ENCODE measurements at regions of chr4 and their contacts with region 1.

Region 1: GRCh38 chr4:155639704-155640523 is 26.7 kb upstream of the GUCY1A1 start:
- DNase-seq: peak; percentile 45
- ATAC-seq: peak; percentile 85
- H3K4me3 ChIP-seq: no peak overlapping the region
- H3K27ac ChIP-seq: no peak overlapping the region
- H3K4me1 ChIP-seq: peaks cover 7% of the 10 kb centered on the region
- H3K27me3 ChIP-seq: no peaks in the 10 kb centered on the region
- CTCF ChIP-seq: no peak
- EP300 ChIP-seq: no peak
- POLR2A ChIP-seq: no peak
- RAD21 ChIP-seq: no peak

Region 2: DNA sequence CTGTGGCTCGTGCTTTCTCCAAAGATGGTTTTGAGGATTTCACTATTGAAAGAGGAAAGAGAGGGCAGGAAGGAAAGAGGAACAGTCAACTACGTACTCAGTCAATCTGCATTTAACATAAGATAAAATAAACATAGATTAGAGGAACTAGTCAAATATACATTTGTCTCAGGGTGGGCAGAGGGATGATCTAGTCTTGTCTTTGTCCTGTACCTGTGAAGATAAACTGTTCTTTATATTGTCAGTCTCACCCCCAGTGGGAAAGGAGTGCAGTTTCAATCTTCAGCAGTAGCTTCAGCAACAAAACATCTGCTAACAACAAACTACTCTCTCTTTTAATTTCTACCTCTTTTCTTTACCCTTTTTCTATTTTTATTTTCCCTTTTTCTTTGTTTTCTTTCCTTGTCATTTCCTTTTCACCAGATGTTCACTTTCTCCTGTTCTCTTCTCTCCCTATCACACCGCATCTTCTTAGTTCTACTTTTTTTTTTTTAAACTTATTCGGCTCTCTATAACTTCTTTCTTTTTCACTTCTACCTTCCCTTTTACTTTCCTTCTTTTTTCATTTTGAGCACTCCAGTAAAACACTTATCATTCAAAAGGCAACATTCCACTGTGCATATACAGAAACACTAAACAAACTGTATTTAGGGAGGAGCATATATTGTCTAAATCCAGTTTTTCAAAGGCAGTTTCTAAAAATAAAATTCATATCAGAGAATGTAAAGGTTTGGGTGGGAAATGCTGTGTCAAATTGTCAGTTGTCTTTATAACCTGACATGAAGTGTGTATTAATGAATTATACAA is 24.6 kb before region 1 on chr4:
- CTCF ChIA-PET with region 1: interaction called, 4 read pairs
- POLR2A ChIA-PET with region 1: interaction called, 8 read pairs
- RAD21 ChIA-PET with region 1: interaction called, 6 read pairs
- SMC1A ChIA-PET with region 1: interaction called, 11 read pairs
- in situ Hi-C with region 1: no loop called
- intact Hi-C with region 1: no loop called
- DNase-seq: no peak
- ATAC-seq: peak; percentile 70
- H3K4me3 ChIP-seq: no peak overlapping the region
- H3K27ac ChIP-seq: no peak overlapping the region
- H3K4me1 ChIP-seq: no peaks in the 10 kb centered on the region
- H3K27me3 ChIP-seq: no peaks in the 10 kb centered on the region; a peak in 1 of 4 replicates
- CTCF ChIP-seq: no peak
- EP300 ChIP-seq: no peak
- POLR2A ChIP-seq: no peak
- RAD21 ChIP-seq: no peak